A549 (cell line): ENCODE measurements at regions of chr13 and their contacts with region 1.

Region 1: DNA sequence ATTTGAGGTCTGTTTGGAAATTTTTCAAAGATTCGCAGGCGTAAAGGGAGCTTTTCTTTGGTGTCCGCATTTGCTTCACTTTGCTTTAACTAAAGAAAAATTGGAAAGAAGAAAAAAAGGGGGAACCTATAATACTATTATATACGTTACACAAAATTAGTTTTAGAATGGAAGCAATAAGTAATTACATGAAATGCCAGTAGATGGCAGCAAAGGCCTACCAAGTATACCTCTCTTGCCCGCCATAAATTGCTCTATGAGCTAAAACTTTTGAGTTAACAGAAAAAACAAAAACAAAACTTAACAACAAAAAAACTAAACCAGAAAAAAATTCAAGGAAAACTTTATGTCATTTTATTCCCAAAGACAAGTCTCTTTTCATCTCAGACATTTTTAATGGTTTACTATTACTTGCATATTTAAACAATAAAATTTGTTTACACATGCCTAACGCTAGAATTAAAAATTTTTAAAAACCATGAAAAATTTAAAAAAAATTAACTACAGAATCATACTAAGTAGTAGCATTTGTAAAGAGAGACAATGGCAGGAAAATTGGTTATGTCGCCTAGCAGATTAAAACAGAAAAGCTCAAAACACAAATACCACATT is 271.4 kb downstream of the NALCN start:
- DNase-seq: peak in 1 of 2 experiments; percentile 50
- ATAC-seq: peak in 1 of 2 experiments; percentile 64; a peak in 3 of 6 replicates
- H3K4me3 ChIP-seq: no peak overlapping the region
- H3K27ac ChIP-seq: no peak overlapping the region
- H3K4me1 ChIP-seq: no peaks in the 10 kb centered on the region
- CTCF ChIP-seq: peak; percentile 69
- EP300 ChIP-seq: no peak
- POLR2A ChIP-seq: no peak
- RAD21 ChIP-seq: peak; percentile 82 to 85

Region 2: DNA sequence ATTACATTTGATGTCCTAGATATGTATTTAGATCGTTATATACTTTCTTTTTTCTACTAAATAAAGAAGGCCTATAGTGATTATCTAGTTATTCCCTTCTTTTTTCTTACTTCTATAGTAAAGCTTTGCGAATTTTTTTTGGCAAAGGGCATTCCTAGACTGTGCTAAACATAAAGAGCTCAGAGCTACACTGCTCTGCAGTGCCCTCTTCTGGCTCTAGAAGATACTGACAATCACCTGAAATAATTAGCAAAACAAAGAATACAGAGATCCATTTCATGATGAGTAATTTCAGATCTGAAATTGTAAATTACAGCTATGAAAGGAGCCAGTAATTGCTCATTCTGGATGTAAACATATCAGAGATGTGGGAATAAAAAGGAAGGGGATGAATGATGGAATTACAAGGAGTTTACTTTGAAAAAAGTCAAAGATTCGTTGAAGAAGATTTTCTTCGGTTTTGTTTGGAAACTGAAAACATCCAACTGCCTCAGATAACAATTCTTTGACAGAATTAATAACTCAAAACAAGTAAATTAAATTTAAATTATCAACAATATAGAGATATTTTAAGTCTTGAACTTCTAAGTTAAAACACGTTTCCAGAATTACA is 17.1 kb before region 1 on chr13:
- CTCF ChIA-PET with region 1: interaction called, 10 read pairs
- POLR2A ChIA-PET with region 1: no interaction called
- DNase-seq: peak; percentile 19 to 25
- ATAC-seq: peak in 1 of 2 experiments; percentile 71; a peak in 3 of 6 replicates
- H3K4me3 ChIP-seq: no peak overlapping the region
- H3K27ac ChIP-seq: no peak overlapping the region
- H3K4me1 ChIP-seq: no peaks in the 10 kb centered on the region
- CTCF ChIP-seq: peak; percentile 57
- EP300 ChIP-seq: no peak
- POLR2A ChIP-seq: no peak
- RAD21 ChIP-seq: peak; percentile 38 to 59; a peak in 3 of 5 replicates

Region 3: GRCh38 chr13:101155920-101156319 is 11.0 kb after region 1 on chr13:
- CTCF ChIA-PET with region 1: interaction called, 14 read pairs
- POLR2A ChIA-PET with region 1: no interaction called
- DNase-seq: peak in 1 of 2 experiments; percentile 2
- ATAC-seq: 0 out of 6 replicates have a peak, but pooled peaks of 1 of the 2 experiments have one; percentile 48
- H3K4me3 ChIP-seq: no peak overlapping the region
- H3K27ac ChIP-seq: no peak overlapping the region
- H3K4me1 ChIP-seq: no peaks in the 10 kb centered on the region
- CTCF ChIP-seq: peak; percentile 34; the same call in 2 of the 3 replicates
- EP300 ChIP-seq: no peak
- POLR2A ChIP-seq: no peak
- RAD21 ChIP-seq: peak; percentile 9 to 37; a peak in 2 of 5 replicates

Region 4: GRCh38 chr13:101178406-101178805 is 33.5 kb after region 1 on chr13:
- CTCF ChIA-PET with region 1: no interaction called
- POLR2A ChIA-PET with region 1: no interaction called
- DNase-seq: no peak
- ATAC-seq: no peak
- H3K4me3 ChIP-seq: no peak overlapping the region
- H3K27ac ChIP-seq: no peak overlapping the region
- H3K4me1 ChIP-seq: no peaks in the 10 kb centered on the region
- CTCF ChIP-seq: no peak
- EP300 ChIP-seq: no peak
- POLR2A ChIP-seq: no peak
- RAD21 ChIP-seq: no peak

Region 5: DNA sequence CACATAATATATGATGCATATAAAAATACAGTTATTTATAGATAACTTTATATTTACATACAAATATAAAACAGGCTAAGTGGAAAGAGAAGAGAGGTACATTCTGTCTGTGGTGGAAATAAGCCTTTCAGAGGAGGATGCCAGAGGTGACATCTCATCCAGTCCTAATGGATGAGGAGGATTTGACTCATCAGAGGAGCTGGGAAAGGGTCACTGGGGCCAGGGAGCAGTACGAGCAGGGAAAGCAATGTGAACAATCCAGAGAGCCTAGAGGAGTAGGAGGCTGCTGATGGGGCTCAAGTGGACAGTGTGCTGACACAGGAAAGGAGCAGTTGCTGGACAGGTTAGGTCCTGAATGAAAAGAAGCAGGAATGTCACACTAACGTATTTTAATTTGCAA is 252.8 kb after region 1 on chr13:
- CTCF ChIA-PET with region 1: no interaction called
- POLR2A ChIA-PET with region 1: no interaction called
- DNase-seq: peak in 1 of 2 experiments; percentile 11
- ATAC-seq: peak in 1 of 2 experiments; percentile 73; a peak in 3 of 6 replicates
- H3K4me3 ChIP-seq: no peak overlapping the region
- H3K27ac ChIP-seq: no peak overlapping the region
- H3K4me1 ChIP-seq: peaks cover 3% of the 10 kb centered on the region; the same call in 1 of the 3 replicates
- CTCF ChIP-seq: no peak
- EP300 ChIP-seq: no peak
- POLR2A ChIP-seq: no peak
- RAD21 ChIP-seq: no peak

Region 6: GRCh38 chr13:101474419-101474957 is 329.6 kb after region 1 on chr13:
- CTCF ChIA-PET with region 1: interaction called, 50 read pairs
- POLR2A ChIA-PET with region 1: no interaction called
- DNase-seq: peak in 1 of 2 experiments; percentile 58
- ATAC-seq: peak; percentile 43 to 86
- H3K4me3 ChIP-seq: no peak overlapping the region
- H3K27ac ChIP-seq: peak overlapping the region; percentile 7 to 83; a peak in 4 of 6 replicates
- H3K4me1 ChIP-seq: peaks cover 14% of the 10 kb centered on the region
- CTCF ChIP-seq: peak; percentile 68
- EP300 ChIP-seq: no peak
- POLR2A ChIP-seq: no peak
- RAD21 ChIP-seq: peak; percentile 89 to 95

Region 7: DNA sequence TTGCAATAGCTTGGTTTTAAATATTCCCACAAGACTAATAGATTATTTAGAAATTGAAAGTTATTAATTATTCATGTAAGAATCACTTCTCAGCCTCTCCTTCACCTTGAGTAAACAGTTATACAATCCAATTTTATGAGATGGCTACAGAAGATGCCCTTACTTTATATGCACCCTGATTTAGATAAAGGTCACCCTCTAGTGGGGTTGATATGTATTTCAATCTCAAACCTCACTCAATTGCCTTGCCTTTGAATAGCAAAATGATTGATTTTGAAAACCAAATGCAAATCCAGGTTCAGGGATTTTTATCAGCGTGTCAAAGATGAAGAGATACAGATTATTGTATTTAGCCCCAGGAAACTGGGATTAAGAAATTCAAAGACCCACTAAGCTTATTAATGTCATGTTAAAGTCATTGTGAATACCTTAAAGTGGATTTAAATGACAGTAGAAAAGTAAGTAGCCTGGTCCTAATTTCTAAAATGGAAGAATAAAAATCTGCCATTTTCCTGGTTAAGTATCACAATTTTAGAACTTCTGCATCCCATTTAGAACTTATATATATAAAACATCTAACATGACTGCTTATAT is 612.6 kb after region 1 on chr13:
- CTCF ChIA-PET with region 1: interaction called, 12 read pairs
- POLR2A ChIA-PET with region 1: no interaction called
- DNase-seq: peak; percentile 28 to 45
- ATAC-seq: peak; percentile 73 to 82; a peak in 4 of 6 replicates
- H3K4me3 ChIP-seq: no peak overlapping the region
- H3K27ac ChIP-seq: no peak overlapping the region
- H3K4me1 ChIP-seq: peaks cover 5% of the 10 kb centered on the region; the same call in 2 of the 3 replicates
- CTCF ChIP-seq: peak; percentile 70
- EP300 ChIP-seq: no peak
- POLR2A ChIP-seq: no peak
- RAD21 ChIP-seq: peak; percentile 85 to 86